PC-3 (cell line): ENCODE measurements at regions of chr1 and their contacts with region 1.

Region 1: DNA sequence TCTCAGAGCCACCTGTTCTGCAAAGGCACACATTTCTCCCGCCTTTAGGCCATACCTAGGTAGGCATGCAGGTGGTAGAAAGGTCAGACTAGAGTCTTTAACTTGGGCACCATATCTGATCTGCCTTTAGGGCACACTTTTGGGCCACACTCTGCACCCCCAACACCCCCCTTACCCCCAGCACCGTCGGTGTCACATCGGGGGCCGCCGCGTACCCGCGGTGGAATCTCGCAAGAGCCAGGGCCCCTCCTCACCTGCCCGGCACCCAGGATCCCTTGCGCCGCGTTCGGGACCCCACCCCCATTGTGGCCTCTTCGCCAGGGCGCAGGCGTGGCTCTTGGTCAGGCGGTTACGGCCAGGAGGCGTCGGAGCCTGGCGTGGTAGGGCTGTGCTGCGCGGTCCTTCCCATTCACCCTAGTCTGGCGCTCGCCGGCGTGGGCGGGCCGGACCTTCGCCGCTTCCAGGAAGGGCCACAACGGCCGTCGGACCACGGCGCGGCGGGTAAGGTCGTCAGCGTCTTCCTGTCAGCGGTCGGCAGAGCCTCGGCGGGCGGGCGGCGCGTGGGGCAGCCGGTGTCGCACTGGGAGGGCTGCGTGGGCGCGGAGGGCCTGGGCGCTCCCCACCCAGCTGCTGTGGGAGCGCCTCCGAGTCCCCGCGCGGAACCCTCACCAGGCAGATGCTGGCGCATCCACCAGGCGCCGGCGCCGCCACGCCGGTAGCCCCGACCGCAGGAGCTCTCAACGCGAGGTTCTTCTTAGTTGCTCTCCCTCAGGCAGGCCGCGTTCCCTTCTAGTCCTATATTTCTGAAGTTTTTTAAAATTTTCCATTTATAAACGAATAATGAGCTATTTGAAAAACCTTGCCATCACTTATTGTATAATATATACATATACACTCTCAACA is at the start of gene DNAH14:
- DNase-seq: peak; percentile 94
- ATAC-seq: peak; percentile 98
- H3K4me3 ChIP-seq: peak within 1 kb of the TSS; percentile 81
- H3K27ac ChIP-seq: peak within 1 kb of the TSS; percentile 57
- H3K4me1 ChIP-seq: no peaks in the 10 kb centered on the region
- H3K27me3 ChIP-seq: no peaks in the 10 kb centered on the region
- CTCF ChIP-seq: no peak
- total RNA-seq, gene DNAH14: 36.6 and 42.8 TPM in 2 replicates

Region 2: DNA sequence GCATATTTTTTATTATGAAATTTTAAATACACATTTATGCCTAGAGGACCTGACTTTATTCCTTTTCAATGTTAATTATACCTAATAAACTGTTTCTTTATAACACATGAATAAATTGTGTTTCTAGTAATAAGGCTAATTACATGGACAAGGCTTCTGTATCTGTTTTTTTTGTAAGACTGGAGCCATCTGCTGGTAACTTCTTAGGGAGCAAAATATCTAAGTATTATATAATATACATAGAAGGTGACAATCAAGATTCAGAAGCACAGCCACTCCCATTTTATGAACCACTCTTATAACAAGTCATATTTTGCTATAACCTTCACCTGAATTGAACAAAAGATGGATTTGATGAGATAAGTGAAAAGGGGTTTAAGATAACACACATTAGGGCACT is 414.0 kb after region 1 on chr1:
- CTCF ChIA-PET with region 1: no interaction called
- POLR2A ChIA-PET with region 1: no interaction called
- intact Hi-C with region 1: loop called (anchors 1 kb)
- DNase-seq: peak; percentile 48
- ATAC-seq: peak; percentile 54
- H3K4me3 ChIP-seq: no peak overlapping the region
- H3K27ac ChIP-seq: no peak overlapping the region
- H3K4me1 ChIP-seq: peaks cover 15% of the 10 kb centered on the region; the same call in 1 of the 2 replicates
- H3K27me3 ChIP-seq: no peaks in the 10 kb centered on the region
- CTCF ChIP-seq: peak; percentile 76

Region 3: GRCh38 chr1:225428068-225428880 is 498.7 kb after region 1 on chr1:
- CTCF ChIA-PET with region 1: no interaction called
- POLR2A ChIA-PET with region 1: no interaction called
- intact Hi-C with region 1: loop called (anchors 5 kb)
- DNase-seq: peak; percentile 97
- ATAC-seq: peak; percentile 77
- H3K4me3 ChIP-seq: peak overlapping the region; percentile 89
- H3K27ac ChIP-seq: peak overlapping the region; percentile 69
- H3K4me1 ChIP-seq: peaks cover 39% of the 10 kb centered on the region
- H3K27me3 ChIP-seq: no peaks in the 10 kb centered on the region
- CTCF ChIP-seq: no peak